Activated T-helper 1 cell treated with anti-CD3 and anti-CD28 coated beads, Interleukin-12 subunit alpha, Interleukin-12 subunit beta, Interleukin-2, Interleukin-4 antibody, amounts not matched to agents 30 ng/mL and 10 ng/mL and 1 ng/mL, durations not matched to agents 14 hours and 24 hours and 36 hours (primary cell): ENCODE measurements at regions of chr21 and their contacts with region 1.

Region 1: GRCh38 chr21:45820171-45821091 is 161.1 kb upstream of the COL6A1 start:
- DNase-seq: peak; percentile 71
- H3K4me3 Mint-ChIP-seq: peak overlapping the region; percentile 39
- H3K27ac Mint-ChIP-seq: peak overlapping the region; percentile 13
- H3K4me1 Mint-ChIP-seq: peaks cover 51% of the 10 kb centered on the region
- H3K27me3 Mint-ChIP-seq: peaks cover 2% of the 10 kb centered on the region

Region 2: GRCh38 chr21:45140346-45140940 is 680.0 kb before region 1 on chr21:
- intact Hi-C with region 1: loop called (anchors 1 kb)
- DNase-seq: peak; percentile 50
- H3K4me3 Mint-ChIP-seq: no peak overlapping the region
- H3K27ac Mint-ChIP-seq: no peak overlapping the region
- H3K4me1 Mint-ChIP-seq: peaks cover 5% of the 10 kb centered on the region
- H3K27me3 Mint-ChIP-seq: no peaks in the 10 kb centered on the region

Region 3: GRCh38 chr21:45439161-45439872 is 381.1 kb before region 1 on chr21:
- intact Hi-C with region 1: loop called (anchors 1 kb)
- DNase-seq: peak; percentile 77
- H3K4me3 Mint-ChIP-seq: peak overlapping the region; percentile 5
- H3K27ac Mint-ChIP-seq: peak overlapping the region; percentile 18
- H3K4me1 Mint-ChIP-seq: peaks cover 6% of the 10 kb centered on the region
- H3K27me3 Mint-ChIP-seq: no peaks in the 10 kb centered on the region

Region 4: GRCh38 chr21:45542242-45542666 is 278.2 kb before region 1 on chr21 and contains the start of gene SLC19A1:
- intact Hi-C with region 1: loop called (anchors 1 kb)
- DNase-seq: peak; percentile 78
- H3K4me3 Mint-ChIP-seq: peak within 1 kb of the TSS; percentile 89
- H3K27ac Mint-ChIP-seq: peak within 1 kb of the TSS; percentile 68
- H3K4me1 Mint-ChIP-seq: peaks cover 14% of the 10 kb centered on the region
- H3K27me3 Mint-ChIP-seq: no peaks in the 10 kb centered on the region
- total RNA-seq, gene SLC19A1: 104 and 105 TPM in 2 replicates

Region 5: DNA sequence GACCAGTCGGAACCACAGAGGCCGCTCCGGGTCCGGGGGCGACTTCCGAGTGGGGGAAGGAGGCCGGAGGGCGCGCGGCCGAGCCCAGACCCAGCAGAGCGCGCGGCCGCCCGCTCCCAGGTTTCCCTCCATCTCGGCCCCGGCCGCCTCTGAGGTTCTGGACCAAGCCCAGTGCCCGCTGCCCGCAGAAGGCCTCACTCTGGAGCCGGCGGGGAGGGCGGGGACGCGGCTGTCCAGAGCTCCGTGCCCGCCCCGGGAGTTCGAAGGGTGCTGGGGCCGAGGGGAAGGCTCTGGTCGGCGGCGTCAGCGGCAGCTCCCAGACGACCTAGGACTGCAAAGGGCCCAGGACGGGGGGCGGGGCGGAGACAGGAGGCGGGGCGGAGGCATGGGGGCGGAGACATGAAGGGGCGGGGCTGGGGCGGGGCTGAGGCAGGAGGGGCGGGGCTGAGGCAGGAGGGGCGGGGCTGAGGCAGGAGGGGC is 230.1 kb before region 1 on chr21:
- intact Hi-C with region 1: loop called (anchors 1 kb)
- DNase-seq: peak; percentile 69
- H3K4me3 Mint-ChIP-seq: no peak overlapping the region
- H3K27ac Mint-ChIP-seq: no peak overlapping the region
- H3K4me1 Mint-ChIP-seq: no peaks in the 10 kb centered on the region
- H3K27me3 Mint-ChIP-seq: peaks cover 4% of the 10 kb centered on the region

Region 6: GRCh38 chr21:45643021-45643980 is 177.1 kb before region 1 on chr21 and contains the start of gene PCBP3:
- intact Hi-C with region 1: loop called (anchors 1 kb)
- DNase-seq: peak; percentile 94
- H3K4me3 Mint-ChIP-seq: peak within 1 kb of the TSS; percentile 83
- H3K27ac Mint-ChIP-seq: peak within 1 kb of the TSS; percentile 63
- H3K4me1 Mint-ChIP-seq: peaks cover 15% of the 10 kb centered on the region
- H3K27me3 Mint-ChIP-seq: peaks cover 10% of the 10 kb centered on the region
- total RNA-seq, gene PCBP3: 8.2 and 10.7 TPM in 2 replicates

Region 7: DNA sequence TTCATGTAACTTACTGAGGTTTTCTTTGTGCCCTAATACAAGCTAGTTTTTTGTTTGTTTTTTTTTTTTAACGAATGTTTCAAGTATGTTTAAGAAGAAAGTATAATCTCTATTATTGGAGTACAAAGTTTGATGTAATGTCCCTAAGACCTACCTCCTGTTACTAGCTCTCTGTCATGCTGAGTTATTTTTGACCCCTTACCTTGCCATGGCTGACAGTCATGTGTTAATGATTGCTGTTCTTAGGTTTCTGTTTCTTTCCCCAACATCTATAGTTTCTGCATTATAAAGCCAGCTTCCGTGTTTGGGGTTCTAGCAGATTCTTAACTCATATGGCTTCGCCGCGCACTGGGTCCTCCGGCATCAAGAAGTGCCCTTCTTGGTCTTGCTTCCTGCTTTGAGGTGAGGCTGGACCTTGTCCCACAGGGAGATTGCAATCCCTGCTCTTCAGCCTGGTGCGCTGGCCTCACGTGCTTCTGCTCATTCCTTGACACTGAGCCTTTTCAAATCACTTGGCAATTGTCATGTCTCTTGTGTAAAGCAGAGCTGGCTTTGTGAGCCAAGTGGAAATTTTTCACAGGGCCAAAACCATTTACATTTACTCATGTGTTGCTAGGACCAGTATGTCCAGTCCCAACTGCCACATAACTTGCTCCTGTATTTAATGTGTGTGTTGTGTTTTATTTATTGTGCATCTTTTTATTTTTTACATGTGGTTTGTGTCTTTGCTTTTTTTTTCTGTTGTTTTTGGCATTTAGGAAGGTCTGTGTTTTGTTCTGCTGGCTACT is 26.1 kb after region 1 on chr21:
- intact Hi-C with region 1: no loop called
- DNase-seq: no peak
- H3K4me3 Mint-ChIP-seq: no peak overlapping the region
- H3K27ac Mint-ChIP-seq: no peak overlapping the region
- H3K4me1 Mint-ChIP-seq: no peaks in the 10 kb centered on the region
- H3K27me3 Mint-ChIP-seq: no peaks in the 10 kb centered on the region

Region 8: GRCh38 chr21:45887120-45887611 is 66.7 kb after region 1 on chr21:
- intact Hi-C with region 1: loop called (anchors 5 kb)
- DNase-seq: no peak
- H3K4me3 Mint-ChIP-seq: no peak overlapping the region
- H3K27ac Mint-ChIP-seq: no peak overlapping the region
- H3K4me1 Mint-ChIP-seq: peaks cover 50% of the 10 kb centered on the region
- H3K27me3 Mint-ChIP-seq: peaks cover 18% of the 10 kb centered on the region